Activated CD8-positive, alpha-beta memory T cell treated with anti-CD3 and anti-CD28 coated beads, Interleukin-2, amount 10 ng/mL, durations not matched to agents 7 days and 5 days (primary cell): ENCODE measurements at regions of chr1 and their contacts with region 1.

Region 1: DNA sequence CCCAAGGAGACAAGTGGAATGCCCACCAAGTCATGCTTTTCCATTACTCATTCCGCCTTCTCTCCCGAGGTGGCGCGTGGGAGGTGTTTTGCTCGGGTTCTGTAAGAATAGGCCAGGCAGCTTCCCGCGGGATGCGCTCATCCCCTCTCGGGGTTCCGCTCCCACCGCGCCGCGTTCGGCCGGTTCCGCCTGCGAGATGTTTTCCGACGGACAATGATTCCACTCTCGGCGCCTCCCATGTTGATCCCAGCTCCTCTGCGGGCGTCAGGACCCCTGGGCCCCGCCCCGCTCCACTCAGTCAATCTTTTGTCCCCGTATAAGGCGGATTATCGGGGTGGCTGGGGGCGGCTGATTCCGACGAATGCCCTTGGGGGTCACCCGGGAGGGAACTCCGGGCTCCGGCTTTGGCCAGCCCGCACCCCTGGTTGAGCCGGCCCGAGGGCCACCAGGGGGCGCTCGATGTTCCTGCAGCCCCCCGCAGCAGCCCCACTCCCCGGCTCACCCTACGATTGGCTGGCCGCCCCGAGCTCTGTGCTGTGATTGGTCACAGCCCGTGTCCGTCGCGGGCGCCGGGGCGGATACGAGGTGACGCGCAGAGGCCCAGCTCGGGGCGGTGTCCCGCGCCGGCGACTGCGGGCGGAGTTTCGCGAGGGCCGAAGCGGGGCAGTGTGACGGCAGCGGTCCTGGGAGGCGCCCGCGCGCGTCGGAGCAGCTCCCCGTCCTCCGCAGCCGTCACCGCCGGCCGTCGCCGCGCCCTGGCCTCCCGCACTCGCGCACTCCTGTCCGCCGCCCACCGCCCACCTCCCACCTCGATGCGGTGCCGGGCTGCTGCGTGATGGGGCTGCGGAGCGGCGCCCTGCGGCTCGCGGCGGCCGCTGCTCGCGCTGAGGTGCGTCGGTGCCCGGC is at the start of gene KIF1B:
- DNase-seq: peak; percentile 97
- ATAC-seq: peak; percentile 99
- H3K4me3 Mint-ChIP-seq: peak within 1 kb of the TSS; percentile 81
- H3K27ac Mint-ChIP-seq: peak within 1 kb of the TSS; percentile 70
- H3K4me1 Mint-ChIP-seq: peaks cover 32% of the 10 kb centered on the region
- H3K27me3 Mint-ChIP-seq: peaks cover 8% of the 10 kb centered on the region
- total RNA-seq, gene KIF1B: 14.2 to 21.3 TPM

Region 2: GRCh38 chr1:10170239-10170574 is 40.0 kb before region 1 on chr1:
- CTCF ChIA-PET with region 1: interaction called, 22 read pairs
- DNase-seq: peak; percentile 65
- ATAC-seq: peak; percentile 85
- H3K4me3 Mint-ChIP-seq: peak overlapping the region; percentile 42
- H3K27ac Mint-ChIP-seq: peak overlapping the region; percentile 96
- H3K4me1 Mint-ChIP-seq: peaks cover 66% of the 10 kb centered on the region
- H3K27me3 Mint-ChIP-seq: no peaks in the 10 kb centered on the region

Region 3: DNA sequence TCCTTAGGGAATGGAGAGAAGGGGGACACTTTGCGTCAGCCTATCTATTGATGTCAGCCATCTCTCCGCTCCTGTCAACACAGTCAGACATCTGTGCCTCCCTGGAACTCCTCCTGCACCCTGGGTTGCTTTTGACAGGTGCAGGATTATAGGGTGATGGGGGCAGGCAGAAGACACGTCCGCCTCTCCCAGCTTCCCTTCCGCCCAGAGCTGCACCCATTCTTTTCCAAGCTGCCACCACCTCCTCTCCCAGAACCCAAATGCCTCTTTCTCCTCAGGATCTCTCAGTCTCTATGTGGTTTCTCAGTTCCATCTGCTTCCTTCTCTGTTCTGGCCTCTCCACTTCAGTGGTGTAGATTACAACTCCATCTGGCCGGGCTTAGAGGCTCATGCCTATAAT is 16.9 kb before region 1 on chr1:
- CTCF ChIA-PET with region 1: interaction called, 11 read pairs
- DNase-seq: no peak
- ATAC-seq: no peak
- H3K4me3 Mint-ChIP-seq: no peak overlapping the region
- H3K27ac Mint-ChIP-seq: no peak overlapping the region
- H3K4me1 Mint-ChIP-seq: peaks cover 13% of the 10 kb centered on the region
- H3K27me3 Mint-ChIP-seq: peaks cover 15% of the 10 kb centered on the region

Region 4: GRCh38 chr1:10338047-10338446 is 127.9 kb after region 1 on chr1:
- CTCF ChIA-PET with region 1: interaction called, 50 read pairs
- DNase-seq: peak; percentile 65
- ATAC-seq: peak; percentile 84
- H3K4me3 Mint-ChIP-seq: no peak overlapping the region
- H3K27ac Mint-ChIP-seq: no peak overlapping the region
- H3K4me1 Mint-ChIP-seq: no peaks in the 10 kb centered on the region
- H3K27me3 Mint-ChIP-seq: no peaks in the 10 kb centered on the region

Region 5: GRCh38 chr1:10398734-10399623 is 188.8 kb after region 1 on chr1 and contains the start of gene PGD:
- CTCF ChIA-PET with region 1: interaction called, 15 read pairs
- DNase-seq: peak; percentile 99
- ATAC-seq: peak; percentile 98
- H3K4me3 Mint-ChIP-seq: peak within 1 kb of the TSS; percentile 84
- H3K27ac Mint-ChIP-seq: peak within 1 kb of the TSS; percentile 78
- H3K4me1 Mint-ChIP-seq: peaks cover 31% of the 10 kb centered on the region
- H3K27me3 Mint-ChIP-seq: no peaks in the 10 kb centered on the region
- total RNA-seq, gene PGD: 74.9 to 128 TPM

Region 6: GRCh38 chr1:10430216-10431069 is 220.3 kb after region 1 on chr1 and contains the start of gene CENPS:
- CTCF ChIA-PET with region 1: interaction called, 37 read pairs
- DNase-seq: peak; percentile 94
- ATAC-seq: peak; percentile 89
- H3K4me3 Mint-ChIP-seq: peak within 1 kb of the TSS; percentile 87
- H3K27ac Mint-ChIP-seq: peak within 1 kb of the TSS; percentile 93
- H3K4me1 Mint-ChIP-seq: peaks cover 37% of the 10 kb centered on the region
- H3K27me3 Mint-ChIP-seq: no peaks in the 10 kb centered on the region
- total RNA-seq, gene CENPS: 14.8 to 18.6 TPM